ENCODE measurements at regions of chr2 and their contacts with region 1.

Region 1: GRCh38 chr2:197168705-197169104 is 141.9 kb downstream of the ANKRD44 start:
- DNase-seq: peak; percentile 52
- ATAC-seq: peak; percentile 98
- H3K4me3 ChIP-seq: no peak overlapping the region
- H3K27ac ChIP-seq: no peak overlapping the region
- H3K4me1 ChIP-seq: no peaks in the 10 kb centered on the region
- H3K27me3 ChIP-seq: no peaks in the 10 kb centered on the region
- CTCF ChIP-seq: peak; percentile 59 to 88 (median 87)
- POLR2A ChIP-seq: no peak
- RAD21 ChIP-seq: peak; percentile 77

Region 2: GRCh38 chr2:196849895-196850294 is 318.8 kb before region 1 on chr2:
- CTCF ChIA-PET with region 1: no interaction called
- POLR2A ChIA-PET with region 1: no interaction called
- RAD21 ChIA-PET with region 1: no interaction called
- intact Hi-C with region 1: loop called (anchors 10 kb)
- DNase-seq: no peak
- ATAC-seq: peak; percentile 86
- H3K4me3 ChIP-seq: no peak overlapping the region
- H3K27ac ChIP-seq: no peak overlapping the region
- H3K4me1 ChIP-seq: no peaks in the 10 kb centered on the region
- H3K27me3 ChIP-seq: no peaks in the 10 kb centered on the region
- CTCF ChIP-seq: peak; percentile 27 to 36 (median 27); a peak in 2 of 6 replicates
- POLR2A ChIP-seq: no peak
- RAD21 ChIP-seq: peak; percentile 50

Region 3: DNA sequence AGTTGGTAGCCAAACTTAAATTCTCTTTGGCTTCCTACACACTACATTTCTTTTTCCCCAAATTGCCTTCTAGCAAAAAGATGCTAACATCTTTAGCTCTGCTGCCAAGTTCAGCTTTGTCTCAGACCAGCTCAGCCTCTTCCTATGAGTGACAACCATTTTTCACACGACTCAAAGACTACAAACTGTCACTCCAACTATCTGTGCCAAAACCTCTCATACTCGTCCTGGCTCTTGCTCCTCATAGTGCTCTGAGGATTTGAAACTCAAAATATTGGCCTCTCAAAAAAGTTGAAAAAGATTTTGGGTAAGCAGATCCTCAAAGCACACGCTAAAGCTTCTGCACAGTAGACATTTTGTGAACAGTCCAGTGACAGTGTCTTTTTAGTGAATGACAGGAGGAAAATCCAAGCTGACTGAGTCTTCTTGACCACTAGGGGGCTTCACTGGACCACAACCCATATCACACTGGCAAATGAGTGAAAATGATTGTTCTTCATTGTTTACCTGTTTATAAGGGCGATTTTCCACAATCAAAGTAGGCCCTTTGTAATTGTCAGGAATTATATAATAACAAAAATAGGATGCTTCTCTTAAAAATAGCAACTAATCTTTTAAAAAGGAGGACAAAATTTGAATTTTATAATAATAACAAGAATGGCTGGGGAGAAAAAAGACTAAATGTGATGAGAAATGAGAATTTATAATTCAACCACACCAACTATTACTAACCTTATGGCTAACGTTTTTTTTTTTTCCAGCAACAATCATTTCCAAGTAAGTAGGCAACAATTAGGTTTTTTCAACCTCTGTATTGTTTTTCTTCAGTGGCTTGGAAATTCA is 156.7 kb before region 1 on chr2:
- CTCF ChIA-PET with region 1: interaction called, 3 read pairs
- POLR2A ChIA-PET with region 1: no interaction called
- RAD21 ChIA-PET with region 1: no interaction called
- intact Hi-C with region 1: loop called (anchors 5 kb)
- DNase-seq: peak; percentile 42
- ATAC-seq: peak; percentile 95
- H3K4me3 ChIP-seq: no peak overlapping the region
- H3K27ac ChIP-seq: no peak overlapping the region
- H3K4me1 ChIP-seq: no peaks in the 10 kb centered on the region
- H3K27me3 ChIP-seq: no peaks in the 10 kb centered on the region
- CTCF ChIP-seq: peak; percentile 67 to 93 (median 85); a peak in 5 of 6 replicates
- POLR2A ChIP-seq: no peak
- RAD21 ChIP-seq: peak; percentile 79

Region 4: GRCh38 chr2:197113275-197113711 is 55.4 kb before region 1 on chr2:
- CTCF ChIA-PET with region 1: interaction called, 18 read pairs
- POLR2A ChIA-PET with region 1: no interaction called
- RAD21 ChIA-PET with region 1: interaction called in 1 of 2 experiments, 3 read pairs
- intact Hi-C with region 1: loop called (anchors 5 kb)
- DNase-seq: peak; percentile 18
- ATAC-seq: peak; percentile 54; the same call in 1 of the 2 replicates
- H3K4me3 ChIP-seq: no peak overlapping the region
- H3K27ac ChIP-seq: no peak overlapping the region
- H3K4me1 ChIP-seq: no peaks in the 10 kb centered on the region
- H3K27me3 ChIP-seq: no peaks in the 10 kb centered on the region
- CTCF ChIP-seq: peak; percentile 45 to 72 (median 48)
- POLR2A ChIP-seq: no peak
- RAD21 ChIP-seq: peak; percentile 71

Measured in HCT116 (cell line).